Heart left ventricle (tissue), 16 donors: ENCODE measurements at regions of chr5 and their contacts with region 1.

Region 1: DNA sequence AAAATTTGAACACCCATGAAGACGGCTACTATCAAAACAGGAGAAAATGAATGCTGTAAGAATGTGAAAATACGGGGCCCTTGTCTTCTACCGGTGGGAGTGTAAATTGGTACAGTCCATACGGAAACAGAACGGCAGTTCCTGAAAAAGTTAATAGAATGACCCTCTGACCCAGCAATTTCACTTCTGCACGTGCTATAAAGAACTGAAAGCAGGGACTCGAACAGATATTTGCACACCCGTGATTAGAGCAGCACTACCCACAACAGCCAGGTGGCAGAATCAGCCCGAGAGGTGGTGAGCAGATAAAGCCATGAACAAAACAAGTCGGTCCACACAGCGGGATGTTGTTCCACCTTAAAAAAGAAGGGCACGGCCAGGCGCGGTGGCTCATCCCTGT is 22.6 kb upstream of the SLC12A7 start:
- DNase-seq: no peak
- ATAC-seq: no peak
- H3K4me3 ChIP-seq: no peak overlapping the region
- H3K27ac ChIP-seq: peak overlapping the region in 3 of 12 donors; percentile 14 to 32 (median 24)
- H3K4me1 ChIP-seq: peaks cover 0 to 43% (median 17%) of the 10 kb centered on the region in 12 donors
- H3K27me3 ChIP-seq: no peaks in the 10 kb centered on the region
- CTCF ChIP-seq: peak in 3 of 12 donors; percentile 5 to 29 (median 10)
- POLR2A ChIP-seq: no peak

Region 2: DNA sequence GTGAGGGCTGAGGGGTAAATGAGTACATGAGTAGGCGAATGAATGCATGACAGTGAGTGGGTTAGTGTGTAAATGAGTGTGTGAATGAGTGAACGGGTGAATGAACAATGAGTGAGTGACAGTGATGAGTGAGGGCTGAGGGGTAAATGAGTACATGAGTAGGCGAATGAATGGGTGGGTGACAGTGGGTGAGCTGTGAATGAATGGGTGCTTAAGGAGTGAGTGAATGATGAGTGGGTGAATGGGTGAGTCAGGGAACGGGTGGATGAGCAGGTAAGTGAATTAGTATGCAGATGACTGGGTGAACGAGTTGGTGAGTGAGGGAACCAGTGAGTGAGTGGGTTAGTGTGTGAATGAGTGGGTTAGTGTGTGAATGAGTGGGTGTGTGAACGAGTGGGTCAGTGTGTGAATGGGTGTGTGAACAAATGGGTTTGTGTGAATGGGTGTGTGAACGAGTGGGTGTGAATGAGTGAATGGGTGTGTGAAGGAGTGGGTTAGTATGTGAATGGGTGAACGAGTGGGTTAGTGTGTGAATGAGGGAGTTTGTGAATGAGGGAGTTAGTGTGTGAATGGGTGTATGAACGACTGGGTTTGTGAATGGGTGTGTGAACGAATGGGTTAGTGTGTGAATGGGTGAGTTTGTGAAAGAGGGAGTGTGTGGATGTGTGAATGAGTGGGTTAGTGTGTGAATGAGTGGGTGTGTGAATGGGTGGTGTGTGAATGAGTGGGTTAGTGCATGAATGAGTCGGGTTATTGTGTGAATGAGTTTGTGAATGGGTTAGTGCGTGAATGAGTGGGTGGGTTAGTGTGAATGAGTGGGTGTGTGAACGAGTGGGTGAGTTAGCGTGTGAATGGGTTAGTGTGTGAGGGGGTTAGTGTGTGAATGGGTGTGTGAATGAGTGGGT is 93.0 kb before region 1 on chr5:
- intact Hi-C with region 1: no loop called
- DNase-seq: no peak
- ATAC-seq: no peak
- H3K4me3 ChIP-seq: no peak overlapping the region
- H3K27ac ChIP-seq: no peak overlapping the region
- H3K4me1 ChIP-seq: no peaks in the 10 kb centered on the region
- H3K27me3 ChIP-seq: no peaks in the 10 kb centered on the region
- CTCF ChIP-seq: no peak
- POLR2A ChIP-seq: no peak

Region 3: GRCh38 chr5:1052641-1053390 is 81.7 kb before region 1 on chr5:
- intact Hi-C with region 1: loop called in 2 of 10 experiments (anchors 5 to 10 kb)
- DNase-seq: peak in 4 of 5 donors; percentile 57 to 73 (median 68)
- ATAC-seq: peak; percentile 44 to 72 (median 49)
- H3K4me3 ChIP-seq: no peak overlapping the region
- H3K27ac ChIP-seq: peak overlapping the region in 9 of 12 donors; percentile 31 to 77 (median 62)
- H3K4me1 ChIP-seq: peaks cover 0 to 31% (median 13%) of the 10 kb centered on the region in 12 donors
- H3K27me3 ChIP-seq: no peaks in the 10 kb centered on the region
- CTCF ChIP-seq: peak in 7 of 12 donors; percentile 3 to 25 (median 22)
- POLR2A ChIP-seq: no peak

Region 4: DNA sequence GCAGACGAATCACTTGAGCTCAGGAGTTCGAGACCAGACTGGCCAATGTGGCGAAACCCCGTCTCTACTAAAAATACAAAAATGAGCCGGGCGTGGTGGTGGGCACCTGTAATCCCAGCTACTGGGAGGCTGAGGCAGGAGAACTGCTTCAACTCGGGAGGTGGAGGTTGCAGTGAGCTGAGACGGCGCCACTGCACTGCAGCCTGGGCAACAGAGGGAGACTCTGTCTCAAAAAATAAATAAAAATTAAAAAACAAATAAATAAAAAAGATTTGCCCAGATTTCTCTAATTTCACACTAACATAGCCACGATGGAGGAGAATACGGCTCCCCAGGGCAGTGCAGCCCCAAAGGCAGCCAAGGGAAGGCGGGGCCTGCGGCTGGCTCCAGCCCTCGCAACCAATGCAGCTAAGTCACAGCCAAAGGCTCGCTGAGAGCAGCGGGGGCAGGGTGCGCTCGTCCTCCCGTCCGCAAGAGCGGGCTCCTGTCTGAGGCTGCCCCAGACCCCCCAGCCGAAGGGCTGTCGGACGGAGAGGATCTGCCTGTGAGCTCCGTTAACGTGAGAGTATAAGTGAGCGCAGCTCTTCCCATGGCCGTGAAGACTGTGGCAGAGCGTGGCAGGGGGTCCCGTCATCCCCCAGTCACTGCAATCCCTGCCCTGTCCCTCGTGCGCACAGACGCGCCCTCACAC is 66.1 kb before region 1 on chr5:
- intact Hi-C with region 1: loop called in 1 of 10 experiments (anchors 10 kb)
- DNase-seq: peak in 4 of 5 donors; percentile 59 to 80 (median 74)
- ATAC-seq: peak; percentile 82 to 92 (median 92)
- H3K4me3 ChIP-seq: no peak overlapping the region
- H3K27ac ChIP-seq: peak overlapping the region in 3 of 12 donors; percentile 5 to 54 (median 10)
- H3K4me1 ChIP-seq: peaks cover 0 to 16% (median 6%) of the 10 kb centered on the region in 12 donors
- H3K27me3 ChIP-seq: no peaks in the 10 kb centered on the region
- CTCF ChIP-seq: no peak
- POLR2A ChIP-seq: no peak

Region 5: DNA sequence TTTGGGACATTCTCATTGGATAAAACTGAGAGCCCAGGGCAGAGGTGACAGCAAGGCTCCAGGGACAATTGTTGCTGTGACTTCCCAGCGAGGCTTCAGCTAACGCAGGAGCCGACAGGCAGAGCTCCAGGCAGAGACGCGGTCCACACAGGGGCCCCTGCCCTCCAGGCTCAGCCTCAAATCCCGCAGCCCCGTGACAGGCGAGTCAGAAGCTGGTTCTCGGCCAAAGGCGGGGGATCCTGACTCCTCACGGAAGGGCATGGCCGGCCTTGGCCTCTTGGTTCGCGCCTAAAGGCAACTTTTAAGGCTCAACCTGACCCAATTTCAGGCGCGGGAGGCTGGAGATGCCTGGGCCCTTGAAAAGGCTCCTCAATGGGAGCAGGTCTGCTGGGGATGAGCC is 43.9 kb before region 1 on chr5:
- intact Hi-C with region 1: loop called in 3 of 10 experiments (anchors 2 to 5 kb)
- DNase-seq: peak; percentile 63 to 83 (median 74)
- ATAC-seq: peak; percentile 1 to 52 (median 28)
- H3K4me3 ChIP-seq: no peak overlapping the region
- H3K27ac ChIP-seq: peak overlapping the region; percentile 31 to 81 (median 53)
- H3K4me1 ChIP-seq: peaks cover 0 to 56% (median 29%) of the 10 kb centered on the region in 12 donors
- H3K27me3 ChIP-seq: no peaks in the 10 kb centered on the region
- CTCF ChIP-seq: no peak
- POLR2A ChIP-seq: no peak

Region 6: GRCh38 chr5:1167728-1168709 is 33.5 kb after region 1 on chr5:
- intact Hi-C with region 1: no loop called
- DNase-seq: peak; percentile 64 to 80 (median 69)
- ATAC-seq: peak; percentile 62 to 84 (median 71)
- H3K4me3 ChIP-seq: peak overlapping the region in 6 of 12 donors; percentile 5 to 32 (median 13)
- H3K27ac ChIP-seq: no peak overlapping the region
- H3K4me1 ChIP-seq: peaks cover 0 to 12% (median 7%) of the 10 kb centered on the region in 12 donors
- H3K27me3 ChIP-seq: peaks cover 0 to 8% (median 0%) of the 10 kb centered on the region in 9 donors
- CTCF ChIP-seq: peak; percentile 40 to 73 (median 62)
- POLR2A ChIP-seq: no peak